ENCODE measurements at regions of chr14 and their contacts with region 1.

Region 1: GRCh38 chr14:91286530-91286937 is 42.0 kb upstream of the GPR68 start:
- DNase-seq: peak; percentile 65 to 89
- H3K4me3 ChIP-seq: no peak overlapping the region
- H3K27ac ChIP-seq: no peak overlapping the region
- H3K4me1 ChIP-seq: no peaks in the 10 kb centered on the region
- H3K27me3 ChIP-seq: no peaks in the 10 kb centered on the region
- CTCF ChIP-seq: peak; percentile 65 to 97 (median 96)
- EP300 ChIP-seq: no peak
- POLR2A ChIP-seq: no peak
- RAD21 ChIP-seq: peak; percentile 72 to 81

Region 2: DNA sequence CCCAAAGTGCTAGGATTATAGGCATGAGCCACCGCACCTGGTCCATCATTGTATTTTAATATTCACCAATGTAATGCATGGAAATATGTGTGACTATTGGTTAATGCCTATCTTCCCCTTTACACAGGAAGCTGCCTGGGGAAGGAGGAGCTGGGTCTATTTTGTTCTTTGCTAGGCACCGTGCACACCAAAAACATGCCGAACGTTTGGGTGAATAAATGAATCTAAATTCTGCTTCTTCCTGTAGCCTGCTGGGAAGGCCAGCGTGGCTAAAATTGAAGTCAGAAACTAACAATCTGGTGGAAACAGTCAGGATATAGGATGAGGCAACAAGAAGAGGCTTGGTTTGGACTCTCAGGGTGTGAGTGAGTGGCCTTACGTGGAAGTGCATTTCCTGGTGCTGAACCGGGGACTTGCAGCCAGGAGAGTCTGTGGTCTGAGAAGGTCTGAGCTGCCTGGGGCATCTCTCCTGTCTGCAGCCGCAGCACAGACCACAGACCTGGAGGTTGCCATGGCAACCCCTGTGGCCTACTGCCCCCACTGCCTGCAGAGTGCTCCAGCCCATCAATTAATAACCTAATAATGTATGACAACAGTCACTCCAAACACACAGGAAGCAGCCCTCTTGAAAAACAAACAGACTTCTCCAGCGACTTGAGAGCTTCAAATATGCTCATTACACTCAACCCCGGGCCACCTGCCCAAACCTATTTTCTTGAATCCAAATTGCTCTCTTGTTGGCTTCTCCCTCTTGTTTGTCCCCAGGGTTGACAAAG is 36.5 kb before region 1 on chr14:
- CTCF ChIA-PET with region 1: interaction called, 22 read pairs
- POLR2A ChIA-PET with region 1: interaction called, 3 read pairs
- DNase-seq: no peak
- H3K4me3 ChIP-seq: no peak overlapping the region
- H3K27ac ChIP-seq: no peak overlapping the region
- H3K4me1 ChIP-seq: peaks cover 0 to 10% (median 8%) of the 10 kb centered on the region in 4 experiments; a peak in 6 of 7 replicates
- H3K27me3 ChIP-seq: peaks cover 0 to 16% (median 9%) of the 10 kb centered on the region in 4 experiments; a peak in 6 of 7 replicates
- CTCF ChIP-seq: no peak
- EP300 ChIP-seq: no peak
- POLR2A ChIP-seq: no peak
- RAD21 ChIP-seq: no peak

Region 3: GRCh38 chr14:91258011-91258618 is 28.4 kb before region 1 on chr14:
- CTCF ChIA-PET with region 1: interaction called, 22 read pairs
- POLR2A ChIA-PET with region 1: no interaction called
- DNase-seq: no peak
- H3K4me3 ChIP-seq: no peak overlapping the region
- H3K27ac ChIP-seq: no peak overlapping the region
- H3K4me1 ChIP-seq: peaks cover 0 to 5% (median 4%) of the 10 kb centered on the region in 4 experiments; a peak in 5 of 7 replicates
- H3K27me3 ChIP-seq: peaks cover 0 to 10% (median 7%) of the 10 kb centered on the region in 4 experiments; a peak in 6 of 7 replicates
- CTCF ChIP-seq: no peak
- EP300 ChIP-seq: no peak
- POLR2A ChIP-seq: no peak
- RAD21 ChIP-seq: no peak

Region 4: DNA sequence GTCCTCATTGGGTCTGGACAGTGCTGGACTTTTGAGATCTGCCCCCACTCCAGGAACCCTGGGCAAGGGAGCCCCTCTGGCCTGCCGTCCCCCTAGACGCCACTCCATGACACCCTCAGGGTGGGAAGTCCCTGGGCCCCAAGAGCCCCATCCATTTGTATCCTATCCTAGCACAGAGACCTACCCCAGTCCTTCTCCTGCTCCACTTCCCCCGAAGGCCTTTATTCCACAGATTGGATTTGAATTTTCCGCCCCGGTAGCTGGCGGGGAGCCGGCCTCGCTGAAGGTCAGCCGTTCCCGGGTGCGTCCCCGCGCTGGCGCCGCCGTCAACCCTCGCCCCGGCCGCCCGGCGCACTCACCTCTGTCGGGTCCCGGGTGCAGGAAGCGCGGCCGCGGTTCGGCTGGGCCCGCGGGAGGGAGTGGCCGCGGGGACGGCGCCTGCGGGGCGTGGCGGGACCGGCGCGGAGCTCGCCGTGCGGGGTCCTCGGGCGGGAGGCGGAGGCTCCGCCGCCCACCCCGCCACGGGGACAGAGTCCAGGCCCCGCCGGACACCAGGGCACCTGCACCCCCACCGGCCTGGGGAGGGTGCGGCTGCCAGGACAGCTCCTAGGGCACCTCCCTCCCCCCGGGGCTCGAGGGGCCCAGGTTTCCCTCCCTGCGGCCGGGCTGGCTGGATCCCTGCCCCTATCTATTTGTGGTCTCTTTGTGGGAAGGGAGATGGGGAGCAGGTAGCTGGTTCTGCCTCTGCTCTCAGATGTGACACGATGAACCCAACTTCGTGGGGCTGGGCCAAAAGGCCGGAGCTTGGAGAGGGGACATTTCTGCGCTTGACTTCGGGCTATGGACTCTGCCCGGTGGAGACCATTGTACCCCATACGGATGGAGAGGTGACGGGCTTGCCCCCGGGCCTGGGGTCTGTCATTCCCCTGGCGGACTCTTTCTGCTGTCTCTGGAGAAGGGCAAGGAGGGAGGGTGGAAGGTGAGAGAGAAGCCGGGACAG is 22.1 kb before region 1 on chr14:
- CTCF ChIA-PET with region 1: interaction called, 16 read pairs
- POLR2A ChIA-PET with region 1: no interaction called
- DNase-seq: peak in 1 of 2 experiments; percentile 71
- H3K4me3 ChIP-seq: peak overlapping the region; percentile 39 to 64 (median 54)
- H3K27ac ChIP-seq: no peak overlapping the region
- H3K4me1 ChIP-seq: peaks cover 0 to 6% (median 1%) of the 10 kb centered on the region in 4 experiments; a peak in 6 of 7 replicates
- H3K27me3 ChIP-seq: peaks cover 0 to 27% (median 21%) of the 10 kb centered on the region in 4 experiments; a peak in 6 of 7 replicates
- CTCF ChIP-seq: no peak
- EP300 ChIP-seq: no peak
- POLR2A ChIP-seq: no peak
- RAD21 ChIP-seq: no peak

Region 5: GRCh38 chr14:91272341-91273272 is 13.9 kb before region 1 on chr14:
- CTCF ChIA-PET with region 1: interaction called, 17 read pairs
- POLR2A ChIA-PET with region 1: interaction called, 4 read pairs
- DNase-seq: no peak
- H3K4me3 ChIP-seq: no peak overlapping the region
- H3K27ac ChIP-seq: no peak overlapping the region
- H3K4me1 ChIP-seq: no peaks in the 10 kb centered on the region
- H3K27me3 ChIP-seq: no peaks in the 10 kb centered on the region
- CTCF ChIP-seq: no peak
- EP300 ChIP-seq: no peak
- POLR2A ChIP-seq: no peak
- RAD21 ChIP-seq: no peak

Region 6: GRCh38 chr14:91338379-91338778 is 51.8 kb after region 1 on chr14:
- CTCF ChIA-PET with region 1: no interaction called
- POLR2A ChIA-PET with region 1: no interaction called
- DNase-seq: no peak
- H3K4me3 ChIP-seq: no peak overlapping the region
- H3K27ac ChIP-seq: no peak overlapping the region
- H3K4me1 ChIP-seq: no peaks in the 10 kb centered on the region
- H3K27me3 ChIP-seq: no peaks in the 10 kb centered on the region
- CTCF ChIP-seq: no peak
- EP300 ChIP-seq: no peak
- POLR2A ChIP-seq: no peak
- RAD21 ChIP-seq: no peak

Region 7: DNA sequence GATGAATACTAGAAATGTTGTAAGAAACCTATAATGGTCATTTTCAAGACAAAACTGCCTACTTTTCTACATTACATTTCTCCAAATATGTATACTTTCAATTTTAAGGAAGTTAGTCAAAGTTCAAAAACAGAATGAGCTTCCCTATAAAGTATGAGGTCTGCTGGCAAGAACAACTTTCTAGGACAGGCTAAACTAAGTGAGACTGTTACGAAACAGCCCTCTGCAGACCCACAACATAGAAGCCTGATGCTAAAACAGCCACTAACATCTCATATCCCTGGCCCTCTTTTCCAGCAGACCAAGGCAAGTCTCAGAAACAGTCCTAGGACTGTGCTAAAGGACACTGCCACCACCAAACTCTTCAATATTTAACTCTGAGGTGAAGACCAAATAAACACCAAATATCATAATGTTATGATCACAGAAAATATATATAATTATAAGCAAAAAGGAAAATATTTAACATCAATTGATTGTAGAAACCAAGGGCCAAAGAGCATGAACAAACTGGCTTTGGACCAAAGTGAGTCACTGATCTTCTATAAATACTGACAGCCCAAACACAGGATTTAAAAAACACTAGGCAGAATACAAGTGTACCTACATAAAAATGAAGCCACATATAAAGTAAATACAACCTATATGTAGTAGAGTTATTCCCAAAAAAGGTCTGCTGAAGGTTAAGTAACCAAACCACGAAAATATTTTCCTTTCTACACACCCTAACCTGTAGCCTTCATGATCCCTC is 195.9 kb after region 1 on chr14:
- CTCF ChIA-PET with region 1: no interaction called
- POLR2A ChIA-PET with region 1: no interaction called
- DNase-seq: no peak
- H3K4me3 ChIP-seq: no peak overlapping the region
- H3K27ac ChIP-seq: no peak overlapping the region
- H3K4me1 ChIP-seq: no peaks in the 10 kb centered on the region
- H3K27me3 ChIP-seq: no peaks in the 10 kb centered on the region
- CTCF ChIP-seq: no peak
- EP300 ChIP-seq: no peak
- POLR2A ChIP-seq: no peak
- RAD21 ChIP-seq: no peak